HEK293 (cell line): ENCODE measurements at regions of chr22 and their contacts with region 1.

Region 1: GRCh38 chr22:37594237-37594636 is 14.3 kb upstream of the LGALS2 start:
- H3K4me3 ChIP-seq: no peak overlapping the region
- H3K27ac ChIP-seq: no peak overlapping the region
- H3K4me1 ChIP-seq: no peaks in the 10 kb centered on the region; the same call in 1 of the 2 replicates
- CTCF ChIP-seq: no peak

Region 2: GRCh38 chr22:37316875-37317371 is 277.3 kb before region 1 on chr22:
- CTCF ChIA-PET with region 1: interaction called, 11 read pairs
- POLR2A ChIA-PET with region 1: no interaction called
- H3K4me3 ChIP-seq: no peak overlapping the region
- H3K27ac ChIP-seq: no peak overlapping the region
- H3K4me1 ChIP-seq: no peaks in the 10 kb centered on the region
- CTCF ChIP-seq: peak; percentile 95

Region 3: GRCh38 chr22:37529652-37530345 is 64.4 kb before region 1 on chr22:
- CTCF ChIA-PET with region 1: interaction called, 11 read pairs
- POLR2A ChIA-PET with region 1: interaction called, 3 read pairs
- H3K4me3 ChIP-seq: no peak overlapping the region
- H3K27ac ChIP-seq: no peak overlapping the region
- H3K4me1 ChIP-seq: peaks cover 5% of the 10 kb centered on the region
- CTCF ChIP-seq: no peak

Region 4: DNA sequence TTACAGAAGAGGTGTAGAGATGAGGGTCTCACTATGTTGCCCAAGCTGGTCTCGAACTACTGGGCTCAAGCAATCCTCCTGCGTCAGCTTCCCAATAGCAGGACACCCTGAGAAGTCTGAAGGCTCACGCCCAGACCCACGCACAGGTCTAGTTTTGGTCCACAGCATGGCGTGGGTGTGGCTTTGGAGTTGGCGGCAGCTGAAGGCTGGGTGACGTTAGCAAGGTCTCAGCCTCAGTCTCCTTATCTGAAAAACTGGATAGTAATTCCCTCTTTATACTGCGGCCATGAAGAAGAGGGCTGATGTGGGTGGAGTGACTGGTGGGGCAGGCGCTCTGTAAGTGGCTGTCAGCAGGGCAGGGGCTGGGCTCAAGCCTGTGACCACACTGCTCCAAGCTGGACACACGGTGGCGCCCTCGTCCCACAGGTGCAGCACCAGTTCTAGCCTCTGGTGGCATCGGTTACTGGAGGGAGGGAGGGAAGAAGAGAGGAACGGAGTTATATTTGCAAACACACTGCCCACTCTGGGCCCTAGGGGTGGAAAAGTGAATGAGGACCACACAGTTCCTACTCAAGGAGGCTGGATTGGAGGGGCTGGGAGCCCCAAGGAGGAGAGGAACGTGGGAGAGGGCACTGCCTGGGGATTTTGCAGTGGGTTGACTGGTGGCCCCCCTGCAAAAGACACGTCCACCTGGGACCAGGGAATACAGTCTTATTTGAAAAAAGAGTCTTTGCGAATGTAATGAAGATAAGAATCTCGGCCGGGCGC is 55.5 kb before region 1 on chr22:
- CTCF ChIA-PET with region 1: interaction called, 287 read pairs
- POLR2A ChIA-PET with region 1: interaction called, 6 read pairs
- H3K4me3 ChIP-seq: no peak overlapping the region
- H3K27ac ChIP-seq: no peak overlapping the region; the same call in 1 of the 2 replicates
- H3K4me1 ChIP-seq: peaks cover 7% of the 10 kb centered on the region
- CTCF ChIP-seq: peak; percentile 100

Region 5: DNA sequence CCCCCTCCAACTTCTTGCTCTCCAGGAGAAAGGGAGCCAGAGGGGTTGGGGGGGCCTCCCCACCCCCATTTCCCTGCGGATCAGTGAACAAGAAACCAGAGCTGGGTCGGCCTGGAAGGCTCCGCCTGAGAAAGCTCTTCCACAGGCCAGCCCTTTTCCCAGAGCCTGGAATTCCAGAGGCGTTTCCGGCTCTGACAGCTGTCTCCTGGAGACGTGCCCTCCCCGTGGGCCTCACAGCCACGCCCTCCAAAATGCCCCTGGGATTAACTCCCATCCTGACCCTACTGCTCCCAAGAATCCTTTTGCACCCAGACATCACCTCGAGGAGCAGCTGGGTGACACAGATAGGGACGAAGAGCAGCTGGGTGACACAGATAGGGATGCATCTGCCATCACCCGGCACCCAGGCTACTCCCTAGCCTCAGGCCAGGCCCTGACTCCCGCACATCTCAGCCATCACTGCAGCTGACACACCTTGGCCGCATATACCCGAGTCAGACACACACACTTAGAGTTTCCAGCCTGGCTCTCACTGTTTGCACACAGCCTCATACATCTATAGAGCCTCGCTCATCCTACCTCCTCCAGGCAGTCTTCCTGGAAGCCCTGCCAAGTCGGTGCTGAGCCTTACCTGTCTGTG is 41.6 kb before region 1 on chr22:
- CTCF ChIA-PET with region 1: interaction called, 287 read pairs
- POLR2A ChIA-PET with region 1: interaction called, 3 read pairs
- H3K4me3 ChIP-seq: no peak overlapping the region
- H3K27ac ChIP-seq: no peak overlapping the region
- H3K4me1 ChIP-seq: no peaks in the 10 kb centered on the region
- CTCF ChIP-seq: no peak

Region 6: DNA sequence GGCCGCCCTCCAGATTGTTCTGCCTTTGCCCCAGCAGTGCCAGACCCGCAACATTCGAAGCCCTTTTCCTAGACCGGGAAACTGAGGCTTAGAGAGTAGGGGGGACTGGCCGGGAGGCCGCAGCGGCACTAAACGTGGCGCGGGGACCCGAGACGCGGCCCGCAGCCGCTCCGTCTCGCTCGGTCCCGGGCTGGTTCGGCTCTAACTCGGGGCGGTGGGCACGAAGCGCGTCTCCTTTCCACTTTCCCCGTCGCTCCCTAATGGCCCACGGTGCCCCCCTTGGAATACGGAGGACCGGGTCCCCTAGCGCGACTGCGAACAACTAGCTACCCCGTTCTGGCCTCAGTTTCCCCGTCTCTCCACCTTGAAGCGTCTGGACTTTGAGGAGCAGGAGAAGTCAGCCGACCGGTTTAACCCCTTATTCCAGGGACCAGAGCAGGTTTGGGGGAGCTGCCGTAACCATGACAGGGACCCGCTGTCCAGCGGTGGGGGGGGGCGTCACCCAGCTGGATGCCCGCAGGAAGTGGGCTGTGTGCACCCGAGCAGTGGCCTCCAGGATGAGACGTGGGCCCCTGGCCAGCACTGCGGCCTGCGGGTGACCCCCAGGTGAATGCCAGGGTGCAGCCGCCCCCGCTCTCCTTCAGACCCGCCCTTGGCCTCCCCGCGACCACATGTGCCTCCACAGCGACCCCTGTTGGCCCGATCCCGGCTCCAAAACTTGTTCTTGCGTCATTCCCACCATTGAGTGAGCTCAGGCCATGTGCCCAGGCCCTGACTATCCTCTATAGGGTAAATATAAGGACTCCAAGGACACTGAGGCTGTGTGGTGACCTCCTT is 32.8 kb before region 1 on chr22:
- CTCF ChIA-PET with region 1: interaction called, 145 read pairs
- POLR2A ChIA-PET with region 1: interaction called, 13 read pairs
- H3K4me3 ChIP-seq: peak overlapping the region; percentile 69
- H3K27ac ChIP-seq: peak overlapping the region; percentile 96
- H3K4me1 ChIP-seq: peaks cover 12% of the 10 kb centered on the region
- CTCF ChIP-seq: peak; percentile 94

Region 7: DNA sequence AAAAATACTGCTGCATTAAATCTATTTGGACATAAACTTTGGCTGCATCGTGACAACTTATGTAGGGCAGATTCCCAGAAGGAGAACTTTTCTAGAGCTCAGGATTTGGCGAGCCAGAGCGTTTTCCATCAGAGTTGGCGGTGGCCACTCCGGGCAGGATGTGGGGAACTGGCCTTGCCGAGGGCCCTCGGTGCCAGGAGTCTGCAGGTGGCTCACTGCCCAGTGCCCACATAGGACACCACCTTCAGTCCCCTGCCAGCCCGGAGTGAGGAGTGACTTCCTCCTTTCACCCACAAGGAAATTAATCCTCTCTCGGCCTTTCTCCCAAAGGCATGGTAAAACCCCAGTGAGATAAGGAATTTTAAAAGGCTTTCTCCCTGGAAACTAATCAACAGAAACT is 12.7 kb before region 1 on chr22:
- CTCF ChIA-PET with region 1: interaction called, 39 read pairs
- POLR2A ChIA-PET with region 1: interaction called, 5 read pairs
- H3K4me3 ChIP-seq: no peak overlapping the region
- H3K27ac ChIP-seq: no peak overlapping the region
- H3K4me1 ChIP-seq: 0 out of 2 replicates have a peak, but pooled peaks cover 3% of the 10 kb centered on the region
- CTCF ChIP-seq: no peak